PC-3 (cell line): ENCODE measurements at regions of chr14 and their contacts with region 1.

Region 1: GRCh38 chr14:90697577-90698206 is 118.5 kb downstream of the TTC7B start:
- DNase-seq: peak; percentile 82
- ATAC-seq: peak; percentile 97
- H3K4me3 ChIP-seq: no peak overlapping the region
- H3K27ac ChIP-seq: no peak overlapping the region
- H3K4me1 ChIP-seq: 0 out of 2 replicates have a peak, but pooled peaks cover 3% of the 10 kb centered on the region
- H3K27me3 ChIP-seq: no peaks in the 10 kb centered on the region
- CTCF ChIP-seq: peak; percentile 98

Region 2: DNA sequence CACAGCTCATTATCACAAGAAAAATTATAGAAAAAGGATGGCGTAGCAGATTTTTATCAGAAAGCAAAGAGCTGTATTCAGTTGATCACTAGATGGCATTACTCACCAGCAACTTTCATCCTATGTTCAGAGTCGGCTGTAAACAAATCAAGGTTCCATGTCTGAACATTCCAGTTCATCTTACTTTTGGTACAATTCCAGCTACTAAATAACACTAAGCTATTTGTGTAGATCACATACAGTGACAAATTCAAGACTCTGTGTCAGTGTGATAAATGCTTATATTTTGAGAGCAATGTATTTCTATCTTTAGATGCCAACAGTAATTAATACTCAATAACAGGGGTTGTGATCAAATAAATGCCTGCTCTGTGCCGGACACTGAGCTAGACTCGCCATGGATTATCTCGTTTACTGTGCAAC is 396.0 kb before region 1 on chr14:
- CTCF ChIA-PET with region 1: no interaction called
- POLR2A ChIA-PET with region 1: interaction called, 4 read pairs
- intact Hi-C with region 1: loop called (anchors 1 kb)
- DNase-seq: peak; percentile 60
- ATAC-seq: peak; percentile 69
- H3K4me3 ChIP-seq: no peak overlapping the region
- H3K27ac ChIP-seq: no peak overlapping the region
- H3K4me1 ChIP-seq: no peaks in the 10 kb centered on the region
- H3K27me3 ChIP-seq: no peaks in the 10 kb centered on the region
- CTCF ChIP-seq: peak; percentile 66

Region 3: DNA sequence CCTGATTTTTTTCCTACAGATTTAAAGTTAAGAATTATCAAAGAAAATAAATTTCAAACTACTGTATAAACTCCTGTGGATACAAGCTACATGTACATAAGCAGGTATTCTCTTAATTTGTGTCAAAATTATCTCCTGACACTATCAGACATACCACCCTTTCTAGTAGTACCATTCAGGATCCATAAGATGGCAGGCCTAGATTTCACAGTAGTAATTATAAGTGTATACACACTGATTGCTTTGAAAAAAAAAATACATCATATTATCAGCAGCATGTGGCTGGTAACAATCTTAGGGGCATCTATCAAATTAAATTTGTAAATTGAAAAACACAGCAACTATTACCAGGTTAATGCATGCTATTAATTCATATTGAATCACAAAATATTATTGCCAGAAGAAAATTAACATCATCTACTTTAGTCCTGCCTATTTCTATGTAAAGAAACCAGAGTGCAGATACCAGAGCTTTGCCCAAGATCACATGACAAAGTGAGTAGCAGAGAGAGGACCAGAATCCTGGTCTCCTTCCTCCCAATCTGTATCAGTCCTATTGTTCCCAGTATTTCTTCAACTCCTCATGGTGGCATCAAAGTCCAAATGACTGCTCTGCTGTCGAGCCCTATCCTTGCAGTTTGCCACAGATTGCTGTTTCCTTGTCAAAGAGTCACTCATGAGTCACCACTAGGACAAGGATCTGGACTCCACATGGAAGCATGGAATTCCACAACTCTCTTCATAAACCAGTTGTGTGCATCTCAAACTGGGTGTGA is 328.6 kb before region 1 on chr14:
- CTCF ChIA-PET with region 1: no interaction called
- POLR2A ChIA-PET with region 1: no interaction called
- intact Hi-C with region 1: loop called (anchors 1 kb)
- DNase-seq: peak; percentile 66
- ATAC-seq: peak; percentile 95
- H3K4me3 ChIP-seq: no peak overlapping the region
- H3K27ac ChIP-seq: no peak overlapping the region
- H3K4me1 ChIP-seq: peaks cover 6% of the 10 kb centered on the region
- H3K27me3 ChIP-seq: no peaks in the 10 kb centered on the region
- CTCF ChIP-seq: peak; percentile 46

Region 4: DNA sequence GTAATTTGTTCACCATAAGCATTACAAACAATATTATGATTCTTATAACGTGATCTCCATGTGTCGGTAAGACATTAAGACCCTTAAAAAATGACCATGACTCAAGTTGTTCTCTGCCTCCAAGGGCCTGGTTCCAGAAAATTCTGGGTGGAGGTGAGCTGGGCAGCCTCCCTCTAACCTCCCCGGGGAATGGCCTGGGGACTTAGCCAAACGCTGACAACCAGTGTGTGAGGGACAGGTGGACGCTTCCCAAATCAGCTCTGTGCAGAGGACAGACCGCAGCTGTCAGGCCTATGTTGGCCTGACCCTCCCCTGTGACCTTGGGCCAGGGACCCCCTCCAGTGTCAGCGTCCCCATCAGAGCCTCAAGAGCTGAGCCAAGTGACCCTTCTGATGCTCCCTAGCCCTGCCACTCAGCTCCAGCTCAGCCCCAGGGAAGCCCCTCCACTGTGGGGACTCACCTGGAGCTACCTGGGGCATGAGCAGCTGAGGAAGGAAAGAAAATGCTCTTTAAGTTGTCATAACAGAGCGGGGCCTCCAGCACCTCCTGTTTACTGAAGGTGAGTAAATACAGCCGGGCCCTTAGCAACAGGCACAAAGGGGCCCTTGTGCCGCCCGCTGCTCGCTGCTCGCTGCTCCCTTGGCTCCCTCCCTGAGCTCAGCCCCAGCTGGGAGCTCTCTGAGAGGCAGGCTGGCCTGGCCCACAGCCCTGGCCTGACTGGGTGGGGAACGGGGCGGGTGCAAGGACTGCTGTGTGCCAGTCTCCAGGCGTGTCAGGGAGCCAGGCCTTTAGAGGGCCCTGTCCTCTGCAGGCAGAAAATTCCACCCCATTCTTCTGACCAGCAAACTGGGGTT is 184.3 kb before region 1 on chr14:
- CTCF ChIA-PET with region 1: no interaction called
- POLR2A ChIA-PET with region 1: no interaction called
- intact Hi-C with region 1: loop called (anchors 5 kb)
- DNase-seq: peak; percentile 90
- ATAC-seq: peak; percentile 91
- H3K4me3 ChIP-seq: peak overlapping the region; percentile 13; the same call in 1 of the 2 replicates
- H3K27ac ChIP-seq: peak overlapping the region; percentile 90
- H3K4me1 ChIP-seq: peaks cover 46% of the 10 kb centered on the region
- H3K27me3 ChIP-seq: 0 out of 2 replicates have a peak, but pooled peaks cover 4% of the 10 kb centered on the region
- CTCF ChIP-seq: no peak

Region 5: GRCh38 chr14:90599748-90600507 is 97.8 kb before region 1 on chr14:
- CTCF ChIA-PET with region 1: no interaction called
- POLR2A ChIA-PET with region 1: no interaction called
- intact Hi-C with region 1: loop called (anchors 5 kb)
- DNase-seq: peak; percentile 41
- ATAC-seq: peak; percentile 70
- H3K4me3 ChIP-seq: no peak overlapping the region
- H3K27ac ChIP-seq: no peak overlapping the region
- H3K4me1 ChIP-seq: no peaks in the 10 kb centered on the region
- H3K27me3 ChIP-seq: no peaks in the 10 kb centered on the region
- CTCF ChIP-seq: peak; percentile 45; the same call in 1 of the 2 replicates